Dorsolateral prefrontal cortex (tissue), 120 donors: ENCODE measurements at regions of chr7 and their contacts with region 1.

Region 1: GRCh38 chr7:98178347-98178746 is 32.9 kb upstream of the BHLHA15 start:
- DNase-seq: peak; percentile 56 to 84 (median 80)
- H3K4me3 ChIP-seq: peak overlapping the region in 38 of 59 donors; percentile 0 to 50 (median 24)
- H3K27ac ChIP-seq: peak overlapping the region in 54 of 59 donors; percentile 4 to 83 (median 56)
- H3K27me3 ChIP-seq: no peaks in the 10 kb centered on the region
- CTCF ChIP-seq: peak in 1 of 56 donors; percentile 24

Region 2: DNA sequence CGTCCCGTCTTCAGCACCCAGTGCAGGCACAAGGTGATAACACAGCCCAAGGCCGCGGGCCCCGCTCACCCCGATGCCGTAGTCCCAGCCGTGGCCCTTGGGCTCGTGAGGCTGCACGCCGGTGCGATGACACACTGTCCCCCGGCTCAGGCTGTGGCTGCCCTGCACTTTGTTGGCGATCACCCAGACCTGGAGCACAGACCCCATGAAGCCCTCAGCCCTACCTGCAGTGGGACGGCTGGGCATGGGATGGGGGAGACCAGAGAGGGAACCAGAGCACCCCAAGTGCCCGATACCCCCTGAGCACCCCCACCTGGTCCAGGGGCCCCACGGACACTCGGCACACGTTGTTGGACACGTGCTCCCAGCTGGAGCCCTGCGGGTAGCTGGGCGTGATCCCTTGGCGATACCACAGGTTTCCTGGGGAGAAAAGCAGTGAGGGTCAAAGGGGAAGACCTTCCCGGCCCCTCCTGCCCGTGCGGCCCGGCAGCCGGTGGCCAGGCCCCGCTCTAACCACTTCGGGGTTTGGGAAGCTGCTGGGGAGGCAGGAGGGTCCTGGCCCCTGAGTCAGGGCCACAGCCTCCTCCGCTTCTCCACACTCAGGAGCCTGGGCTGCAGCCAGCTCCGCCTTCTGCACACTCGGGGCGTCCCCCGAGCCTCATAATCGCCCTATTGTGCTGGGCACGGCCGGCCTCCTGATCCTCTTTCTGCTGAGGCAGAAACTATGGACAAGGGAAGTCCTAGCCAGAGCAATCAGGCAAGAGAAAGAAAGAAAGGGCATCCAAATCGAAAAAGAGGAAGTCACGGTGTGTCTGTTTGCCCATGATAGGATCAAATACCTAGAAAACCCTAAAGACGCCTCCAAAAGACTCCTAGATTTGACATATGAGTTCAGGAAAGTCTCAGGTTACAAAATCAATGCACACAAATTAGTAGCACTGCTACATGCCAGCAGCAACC is 39.6 kb after region 1 on chr7:
- intact Hi-C with region 1: loop called in 1 of 2 experiments (anchors 5 kb)
- DNase-seq: peak in 9 of 10 donors; percentile 70 to 82 (median 79)
- H3K4me3 ChIP-seq: peak overlapping the region in 37 of 59 donors; percentile 3 to 59 (median 31)
- H3K27ac ChIP-seq: peak overlapping the region in 53 of 59 donors; percentile 7 to 90 (median 77)
- H3K27me3 ChIP-seq: no peaks in the 10 kb centered on the region
- CTCF ChIP-seq: peak in 2 of 56 donors; percentile 18 to 26

Region 3: DNA sequence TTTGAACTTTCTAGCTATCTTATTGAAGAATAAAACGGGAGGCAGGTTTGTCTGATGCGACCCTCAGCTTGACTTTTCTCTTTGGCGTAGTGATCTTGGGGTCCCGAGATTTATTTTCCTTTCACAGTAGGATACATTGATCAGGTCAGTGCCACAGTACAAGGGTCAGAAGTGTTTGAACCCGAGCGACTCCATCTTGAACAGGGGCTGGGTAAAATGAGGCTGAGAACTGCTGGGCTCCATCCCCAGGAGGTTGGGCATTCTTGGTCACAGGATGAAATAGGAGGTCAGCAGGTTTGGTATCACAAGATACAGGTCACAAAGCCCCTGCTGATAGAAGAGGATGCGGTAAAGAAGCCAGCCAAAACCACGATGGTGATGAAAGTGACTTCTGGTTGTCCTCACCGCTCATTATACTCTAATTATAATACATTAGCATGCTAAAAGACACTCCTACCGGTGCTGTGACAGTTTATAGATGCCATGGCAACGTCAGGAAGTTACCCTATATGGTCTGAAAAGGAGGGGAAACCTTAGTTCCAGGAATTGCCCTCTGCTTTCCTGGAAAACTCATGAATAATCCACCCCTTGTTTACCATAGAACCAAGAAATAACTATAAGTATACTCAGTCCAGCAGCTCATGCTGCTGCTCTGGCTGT is 76.7 kb after region 1 on chr7:
- intact Hi-C with region 1: no loop called
- DNase-seq: no peak
- H3K4me3 ChIP-seq: no peak overlapping the region
- H3K27ac ChIP-seq: no peak overlapping the region
- H3K27me3 ChIP-seq: no peaks in the 10 kb centered on the region
- CTCF ChIP-seq: no peak